BJ (cell line): ENCODE measurements at regions of chr6 and their contacts with region 1.

Region 1: DNA sequence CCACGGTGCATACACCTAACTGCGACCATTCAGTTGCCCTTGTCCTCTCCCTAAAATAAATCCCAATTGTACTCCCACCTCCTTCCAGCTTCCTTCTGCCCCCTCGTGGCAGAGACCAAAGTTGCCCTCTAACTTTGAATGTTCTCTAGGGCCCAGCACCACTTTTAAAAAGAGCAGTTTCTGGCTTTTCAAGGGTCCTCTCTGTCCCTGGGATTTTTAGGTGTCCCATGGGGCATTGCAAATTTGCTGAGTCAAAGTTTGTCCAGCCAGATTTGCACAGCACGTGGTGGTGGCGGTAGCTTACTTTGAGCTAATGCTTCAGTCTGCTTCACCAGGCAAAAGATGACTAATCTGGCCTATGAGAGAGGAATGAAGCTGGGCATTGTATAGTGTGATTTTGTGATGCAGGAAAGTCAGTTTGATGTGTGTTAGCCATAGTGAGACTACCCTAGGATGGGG is 100.2 kb downstream of the PERP start:
- DNase-seq: no peak
- H3K4me3 ChIP-seq: no peak overlapping the region
- H3K27me3 ChIP-seq: 0 out of 2 replicates have a peak, but pooled peaks cover 2% of the 10 kb centered on the region
- CTCF ChIP-seq: peak; percentile 74

Region 2: DNA sequence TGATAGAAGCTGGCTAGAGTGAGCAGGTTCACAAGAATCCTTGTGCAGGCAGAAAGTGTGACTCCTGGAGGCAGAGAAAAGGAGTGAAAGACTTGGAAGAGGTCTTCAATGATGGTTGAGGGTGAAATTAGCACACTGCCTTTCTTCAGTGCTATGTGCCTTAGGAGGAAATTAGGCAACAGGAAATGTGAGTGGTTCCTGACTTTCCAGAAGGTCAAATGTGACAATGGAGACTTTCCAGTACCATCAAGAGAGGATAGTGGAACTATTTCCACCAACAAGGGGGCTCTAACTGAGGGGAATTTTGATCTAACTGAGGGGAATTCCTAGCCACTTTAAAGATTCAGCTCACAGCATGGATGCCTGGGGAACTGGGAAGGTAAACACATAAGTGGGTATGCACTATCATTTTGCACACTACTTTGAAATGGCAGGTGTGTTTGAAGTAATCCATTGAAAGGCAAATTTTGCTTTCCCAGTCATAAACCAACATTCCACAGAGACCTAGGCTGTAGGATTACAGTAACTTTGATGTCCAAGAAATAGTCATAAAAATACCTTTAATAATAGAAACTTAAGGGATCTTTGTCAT is 10.2 kb after region 1 on chr6:
- CTCF ChIA-PET with region 1: interaction called, 13 read pairs
- POLR2A ChIA-PET with region 1: no interaction called
- DNase-seq: no peak
- H3K4me3 ChIP-seq: no peak overlapping the region
- H3K27me3 ChIP-seq: no peaks in the 10 kb centered on the region
- CTCF ChIP-seq: no peak

Region 3: DNA sequence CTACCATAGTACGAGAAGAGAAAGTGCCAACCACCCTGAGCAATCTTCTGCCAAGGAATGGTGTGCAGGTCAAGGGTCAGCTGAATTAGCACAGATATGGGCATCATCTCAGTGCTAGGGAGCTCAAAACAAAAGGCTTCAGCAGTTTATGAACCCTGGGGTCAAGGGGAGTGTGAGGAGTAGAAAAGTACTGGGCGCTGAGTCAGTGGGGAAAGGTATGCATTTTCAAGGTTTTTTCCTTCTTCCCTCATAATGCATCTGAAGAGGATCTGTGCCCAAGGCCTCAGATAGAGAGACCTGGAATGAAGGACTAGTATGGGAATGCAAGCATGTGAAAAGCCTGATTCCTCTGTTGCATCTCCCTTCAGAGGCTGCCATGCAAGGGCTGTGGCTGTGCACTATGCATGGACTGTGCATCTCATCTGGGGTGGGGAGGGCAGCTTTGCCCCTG is 18.5 kb after region 1 on chr6:
- CTCF ChIA-PET with region 1: interaction called, 11 read pairs
- POLR2A ChIA-PET with region 1: no interaction called
- DNase-seq: no peak
- H3K4me3 ChIP-seq: no peak overlapping the region
- H3K27me3 ChIP-seq: no peaks in the 10 kb centered on the region
- CTCF ChIP-seq: no peak

Region 4: GRCh38 chr6:138031850-138032249 is 24.8 kb after region 1 on chr6:
- CTCF ChIA-PET with region 1: interaction called, 11 read pairs
- POLR2A ChIA-PET with region 1: no interaction called
- DNase-seq: no peak
- H3K4me3 ChIP-seq: no peak overlapping the region
- H3K27me3 ChIP-seq: 0 out of 2 replicates have a peak, but pooled peaks cover 2% of the 10 kb centered on the region
- CTCF ChIP-seq: no peak

Region 5: DNA sequence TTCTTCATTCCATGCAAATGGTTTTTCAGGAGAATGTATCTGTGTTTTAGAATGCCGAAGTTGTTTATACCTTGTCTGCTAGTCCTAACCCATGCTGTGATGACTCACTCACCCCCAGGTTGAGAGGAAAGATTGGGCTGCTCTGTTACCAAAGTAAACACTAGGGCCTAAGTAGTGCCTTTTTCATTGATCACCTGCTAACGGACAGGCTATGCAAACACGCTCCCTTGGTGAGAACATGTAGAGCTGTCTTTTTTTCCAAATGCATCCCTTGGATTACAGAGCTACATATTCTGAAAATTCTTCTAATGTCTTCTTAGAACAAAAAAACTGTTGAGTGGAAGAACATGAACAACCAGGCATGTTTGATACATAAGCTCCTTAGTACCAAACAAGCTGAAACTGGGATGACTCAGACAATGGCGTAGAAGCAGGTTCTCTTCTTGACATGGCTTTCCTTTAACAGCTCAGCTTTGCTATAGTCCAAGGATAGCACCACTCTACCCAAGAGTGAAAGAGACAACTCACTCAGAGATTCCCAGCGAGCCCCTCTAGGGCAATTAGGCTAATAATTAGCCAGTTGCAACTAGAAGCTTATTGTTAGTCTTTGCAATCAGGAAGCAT is 79.6 kb after region 1 on chr6:
- CTCF ChIA-PET with region 1: interaction called, 5 read pairs
- POLR2A ChIA-PET with region 1: interaction called, 11 read pairs
- DNase-seq: no peak
- H3K4me3 ChIP-seq: no peak overlapping the region
- H3K27me3 ChIP-seq: peaks cover 2% of the 10 kb centered on the region; the same call in 1 of the 2 replicates
- CTCF ChIP-seq: no peak

Region 6: GRCh38 chr6:138109042-138109997 is 102.3 kb after region 1 on chr6:
- CTCF ChIA-PET with region 1: interaction called, 83 read pairs
- POLR2A ChIA-PET with region 1: no interaction called
- DNase-seq: no peak
- H3K4me3 ChIP-seq: no peak overlapping the region
- H3K27me3 ChIP-seq: peaks cover 4% of the 10 kb centered on the region
- CTCF ChIP-seq: peak; percentile 91